ENCODE measurements at regions of chr13 and their contacts with region 1.

Region 1: DNA sequence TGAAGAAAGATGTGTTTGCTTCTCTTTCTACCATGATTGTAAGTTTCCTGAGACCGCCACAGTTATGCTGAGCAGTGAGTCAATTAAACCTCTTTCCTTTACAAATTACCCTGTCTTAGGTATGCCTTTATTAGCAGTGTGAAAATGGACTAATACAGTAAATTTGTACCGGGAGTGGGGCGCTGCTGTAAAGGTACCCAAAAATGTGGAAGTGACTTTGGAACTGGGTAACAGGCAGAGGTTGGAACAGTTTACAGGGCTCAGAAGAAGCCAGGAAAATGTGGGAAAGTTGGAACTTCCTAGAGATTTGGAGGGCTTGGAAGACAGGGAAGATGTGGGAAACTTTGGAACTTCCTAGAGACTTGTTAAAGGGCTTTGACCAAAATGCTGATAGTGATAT is 9.2 kb upstream of the PDS5B start:
- DNase-seq: no peak
- ATAC-seq: no peak
- H3K4me3 ChIP-seq: no peak overlapping the region
- H3K27ac ChIP-seq: no peak overlapping the region
- H3K4me1 ChIP-seq: no peaks in the 10 kb centered on the region
- H3K27me3 ChIP-seq: no peaks in the 10 kb centered on the region

Region 2: DNA sequence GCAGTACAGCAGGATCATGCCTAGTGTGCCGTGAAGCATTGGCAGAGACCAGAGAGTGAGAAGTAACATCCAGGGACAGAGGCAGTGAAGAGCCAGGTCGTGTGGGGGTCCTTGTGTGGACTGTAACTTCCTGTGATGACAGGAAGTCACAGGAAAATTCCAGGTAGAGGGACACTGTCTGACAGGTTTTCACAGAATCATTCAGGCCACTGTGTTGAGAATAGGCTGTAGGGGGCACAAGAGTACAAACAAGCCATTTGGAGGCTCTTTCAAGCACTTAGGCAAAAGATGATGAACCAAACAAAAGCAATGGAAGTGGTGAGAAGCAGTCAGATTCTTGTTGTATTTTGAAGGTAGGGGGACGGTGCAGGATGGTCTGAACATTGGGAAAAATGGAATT is 195.5 kb before region 1 on chr13:
- intact Hi-C with region 1: loop called in 1 of 2 experiments (anchors 5 kb)
- DNase-seq: no peak
- ATAC-seq: no peak
- H3K4me3 ChIP-seq: no peak overlapping the region
- H3K27ac ChIP-seq: no peak overlapping the region
- H3K4me1 ChIP-seq: no peaks in the 10 kb centered on the region
- H3K27me3 ChIP-seq: no peaks in the 10 kb centered on the region

Measured in aorta (tissue), 5 donors.